ENCODE measurements at regions of chr19 and their contacts with region 1.

Region 1: DNA sequence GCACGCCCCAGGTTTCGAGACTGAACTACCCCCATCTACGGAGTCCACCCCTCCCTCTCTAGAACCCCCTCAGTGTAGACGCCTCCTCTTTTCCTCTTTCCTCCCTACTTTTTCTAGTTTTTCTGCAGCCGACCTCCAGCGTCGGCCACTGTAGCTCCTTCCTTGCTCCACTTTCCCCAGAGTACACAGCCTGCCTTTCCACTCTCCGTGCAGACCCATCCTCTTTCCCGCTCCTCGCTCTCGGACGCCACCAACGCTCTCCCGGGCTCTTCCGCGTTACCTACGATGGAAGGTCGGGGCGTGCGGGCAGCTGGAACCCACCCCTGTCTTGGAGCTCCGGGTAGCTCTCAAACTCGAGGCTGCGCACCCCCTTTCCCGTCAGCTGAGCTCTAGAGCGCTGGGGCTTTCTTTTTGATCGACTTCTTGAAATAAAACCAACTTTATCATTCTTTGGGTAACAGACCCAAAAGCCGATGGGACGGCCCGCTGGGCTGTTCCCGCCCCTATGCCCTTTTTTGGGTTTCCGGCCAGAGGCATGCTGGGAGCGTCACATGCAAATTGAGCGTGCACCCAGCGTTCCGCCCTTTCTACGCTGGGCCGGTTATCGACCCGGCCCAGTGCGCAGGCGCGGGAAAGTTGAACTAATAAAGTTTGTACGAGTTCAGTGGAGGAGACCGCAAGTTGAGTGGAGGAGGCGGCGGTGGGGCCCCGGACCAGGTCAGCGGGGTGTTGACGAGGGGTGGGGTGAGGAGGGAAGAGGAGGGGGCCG is at the starts of genes BCL2L12 and IRF3:
- H3K4me3 ChIP-seq: peak within 1 kb of the TSS; percentile 48
- H3K27ac ChIP-seq: peak within 1 kb of the TSS; percentile 87
- H3K4me1 ChIP-seq: peaks cover 6% of the 10 kb centered on the region
- CTCF ChIP-seq: peak; percentile 50; the same call in 1 of the 2 replicates

Region 2: GRCh38 chr19:49487277-49488045 is 178.1 kb before region 1 on chr19 and contains the start of gene RPL13A:
- CTCF ChIA-PET with region 1: no interaction called
- POLR2A ChIA-PET with region 1: no interaction called
- H3K4me3 ChIP-seq: peak within 1 kb of the TSS; percentile 96
- H3K27ac ChIP-seq: peak within 1 kb of the TSS; percentile 95
- H3K4me1 ChIP-seq: peaks cover 4% of the 10 kb centered on the region; the same call in 1 of the 2 replicates
- CTCF ChIP-seq: no peak

Region 3: GRCh38 chr19:49580264-49581006 is 85.1 kb before region 1 on chr19 and contains the start of gene NOSIP:
- CTCF ChIA-PET with region 1: interaction called, 7 read pairs
- POLR2A ChIA-PET with region 1: interaction called, 12 read pairs
- H3K4me3 ChIP-seq: peak within 1 kb of the TSS; percentile 67
- H3K27ac ChIP-seq: peak within 1 kb of the TSS; percentile 58
- H3K4me1 ChIP-seq: peaks cover 9% of the 10 kb centered on the region
- CTCF ChIP-seq: no peak

Region 4: DNA sequence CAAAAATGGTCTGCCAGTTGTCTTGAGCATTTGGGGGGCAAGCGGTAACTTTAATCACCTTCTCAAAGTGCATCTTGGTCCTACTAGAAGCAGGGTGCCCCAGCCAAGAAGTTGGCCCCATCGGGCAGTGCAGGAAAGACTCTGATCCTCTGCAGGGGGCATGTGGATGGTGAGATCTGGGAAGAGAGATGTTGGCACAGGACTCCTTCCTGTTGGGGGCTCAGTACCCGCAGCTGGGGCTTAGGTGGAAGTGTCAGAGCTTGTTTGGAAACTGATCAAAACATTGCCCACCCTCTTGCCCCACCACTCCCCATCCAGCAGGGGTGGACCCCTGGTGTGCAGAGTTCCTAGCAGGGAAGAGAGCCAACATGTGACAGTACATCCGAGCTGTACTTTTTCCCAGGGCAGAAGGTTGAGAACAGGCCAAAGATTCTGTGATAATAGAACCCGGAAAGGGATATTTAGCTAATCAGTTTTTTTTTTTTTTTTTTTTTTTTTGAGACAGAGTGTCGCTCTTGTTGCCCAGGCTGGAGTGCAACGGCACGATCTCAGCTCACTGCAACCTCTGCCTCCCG is 34.4 kb before region 1 on chr19:
- CTCF ChIA-PET with region 1: no interaction called
- POLR2A ChIA-PET with region 1: no interaction called
- H3K4me3 ChIP-seq: no peak overlapping the region
- H3K27ac ChIP-seq: 0 out of 2 replicates have a peak overlapping the region, but pooled peaks have one; percentile 16
- H3K4me1 ChIP-seq: 0 out of 2 replicates have a peak, but pooled peaks cover 5% of the 10 kb centered on the region
- CTCF ChIP-seq: no peak

Region 5: GRCh38 chr19:49646486-49646985 is 19.0 kb before region 1 on chr19:
- CTCF ChIA-PET with region 1: interaction called, 59 read pairs
- POLR2A ChIA-PET with region 1: interaction called, 85 read pairs
- H3K4me3 ChIP-seq: no peak overlapping the region
- H3K27ac ChIP-seq: no peak overlapping the region
- H3K4me1 ChIP-seq: peaks cover 7% of the 10 kb centered on the region
- CTCF ChIP-seq: no peak

Region 6: DNA sequence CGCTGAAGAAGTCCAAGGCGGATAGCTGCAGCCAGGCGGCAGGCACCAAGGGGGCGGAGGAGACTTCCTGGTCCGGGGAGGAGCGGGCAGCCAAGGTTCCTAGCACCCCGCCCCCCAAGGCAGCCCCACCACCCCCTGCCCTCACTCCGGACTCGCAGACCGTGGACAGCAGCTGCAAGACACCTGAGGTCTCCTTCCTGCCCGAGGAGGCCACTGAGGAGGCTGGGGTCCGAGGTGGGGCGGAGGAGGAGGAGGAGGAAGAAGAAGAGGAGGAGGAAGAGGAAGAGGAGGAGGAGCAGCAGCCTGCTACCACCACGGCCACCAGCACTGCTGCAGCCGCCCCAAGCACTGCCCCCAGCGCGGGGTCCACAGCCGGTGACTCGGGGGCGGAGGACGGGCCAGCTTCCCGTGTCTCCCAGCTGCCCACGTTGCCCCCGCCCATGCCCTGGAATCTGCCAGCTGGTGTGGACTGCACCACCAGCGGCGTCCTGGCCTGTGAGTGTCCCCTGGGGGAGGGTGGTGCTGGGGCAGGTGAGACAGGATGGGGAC is 12.2 kb before region 1 on chr19:
- CTCF ChIA-PET with region 1: interaction called, 3 read pairs
- POLR2A ChIA-PET with region 1: interaction called, 17 read pairs
- H3K4me3 ChIP-seq: no peak overlapping the region
- H3K27ac ChIP-seq: no peak overlapping the region
- H3K4me1 ChIP-seq: no peaks in the 10 kb centered on the region
- CTCF ChIP-seq: no peak

Region 7: DNA sequence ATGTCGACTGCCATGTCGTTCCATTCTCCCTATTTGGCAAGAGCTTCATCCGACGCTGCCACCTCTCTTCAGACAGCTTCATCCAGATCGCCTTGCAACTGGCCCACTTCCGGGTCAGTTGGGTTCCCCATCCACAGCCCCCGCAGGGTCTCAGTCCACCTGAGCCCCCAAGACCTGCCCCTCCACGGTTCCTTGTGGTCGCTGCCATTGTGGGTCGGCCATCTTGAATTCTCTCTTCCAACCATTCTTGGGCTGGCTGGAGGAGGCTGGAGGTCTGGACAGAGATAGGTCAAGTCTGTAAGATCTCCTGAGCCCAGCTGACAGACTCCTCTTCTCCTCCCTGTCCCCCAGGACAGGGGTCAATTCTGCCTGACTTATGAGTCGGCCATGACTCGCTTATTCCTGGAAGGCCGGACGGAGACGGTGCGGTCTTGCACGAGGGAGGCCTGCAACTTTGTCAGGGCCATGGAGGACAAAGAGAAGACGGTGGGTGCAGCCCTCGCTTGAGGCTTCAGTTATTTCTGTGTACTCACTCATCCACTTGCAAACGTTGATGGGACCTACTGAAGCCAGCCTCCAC is 44.9 kb after region 1 on chr19:
- CTCF ChIA-PET with region 1: no interaction called
- POLR2A ChIA-PET with region 1: no interaction called
- H3K4me3 ChIP-seq: no peak overlapping the region
- H3K27ac ChIP-seq: no peak overlapping the region
- H3K4me1 ChIP-seq: no peaks in the 10 kb centered on the region
- CTCF ChIP-seq: no peak

Measured in HEK293 (cell line).